Sigmoid colon (tissue), 7 donors: ENCODE measurements at regions of chr1 and their contacts with region 1.

Region 1: GRCh38 chr1:183148599-183148998 is 37.5 kb upstream of the LAMC2 start:
- DNase-seq: no peak
- H3K4me3 ChIP-seq: no peak overlapping the region
- H3K27ac ChIP-seq: peak overlapping the region; percentile 34 to 70 (median 54)
- H3K4me1 ChIP-seq: peaks cover 0 to 15% (median 10%) of the 10 kb centered on the region in 4 donors
- H3K27me3 ChIP-seq: no peaks in the 10 kb centered on the region
- CTCF ChIP-seq: no peak
- EP300 ChIP-seq: no peak
- POLR2A ChIP-seq: no peak

Region 2: DNA sequence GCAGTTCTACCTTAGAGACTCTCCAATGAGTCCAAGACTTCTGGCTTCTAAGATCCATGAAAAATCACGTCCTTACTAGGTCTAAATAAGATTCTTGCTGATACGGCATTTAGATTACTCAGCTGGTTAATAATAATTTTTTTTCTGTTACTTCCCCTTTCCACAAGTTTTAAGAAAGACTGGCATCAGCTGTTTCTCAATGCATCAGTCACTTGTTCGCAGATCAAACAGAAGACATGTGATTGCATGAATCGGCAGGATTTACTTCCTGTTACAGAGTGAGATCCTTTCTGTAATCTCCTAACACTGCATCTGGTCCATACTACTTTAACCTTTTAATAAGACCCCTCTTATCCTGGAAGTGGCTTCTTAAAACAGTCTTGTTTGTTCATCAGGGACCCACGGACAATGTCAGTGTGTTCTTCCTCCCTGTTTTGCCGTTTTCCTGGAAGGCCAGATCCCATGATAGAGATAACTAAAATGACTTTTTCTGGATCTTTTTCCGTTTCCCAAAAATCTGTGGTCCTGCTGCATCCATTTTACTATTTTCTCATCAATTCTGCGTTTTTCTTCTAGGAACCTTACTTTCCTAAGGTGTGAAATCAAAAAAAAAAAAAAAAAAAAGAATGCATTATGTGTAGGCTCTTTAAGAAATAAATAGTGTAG is 352.9 kb before region 1 on chr1:
- intact Hi-C with region 1: no loop called
- DNase-seq: no peak
- H3K4me3 ChIP-seq: no peak overlapping the region
- H3K27ac ChIP-seq: peak overlapping the region in 1 of 4 donors; percentile 42
- H3K4me1 ChIP-seq: no peaks in the 10 kb centered on the region
- H3K27me3 ChIP-seq: no peaks in the 10 kb centered on the region
- CTCF ChIP-seq: no peak
- EP300 ChIP-seq: no peak
- POLR2A ChIP-seq: no peak

Region 3: DNA sequence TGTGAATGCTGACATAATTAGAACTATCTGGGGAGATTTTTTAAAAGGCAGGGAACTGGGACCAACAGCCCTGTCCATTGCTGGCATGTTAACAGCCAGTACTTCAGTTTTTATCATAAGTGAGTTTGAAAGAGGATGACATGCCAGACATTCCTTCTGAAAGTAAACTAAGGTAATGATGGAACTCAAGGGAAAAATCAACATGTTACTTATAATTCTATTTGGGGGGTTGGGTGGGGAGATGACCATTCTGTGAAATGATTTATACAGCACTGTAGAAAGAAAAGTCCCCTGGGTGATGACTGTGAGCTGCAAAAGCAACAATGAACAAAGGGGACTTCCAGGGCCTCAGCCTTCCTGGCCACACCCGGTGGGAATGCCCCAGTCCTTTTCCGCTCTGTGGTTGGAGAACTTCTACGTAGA is 32.0 kb after region 1 on chr1:
- intact Hi-C with region 1: no loop called
- DNase-seq: no peak
- H3K4me3 ChIP-seq: no peak overlapping the region
- H3K27ac ChIP-seq: peak overlapping the region; percentile 68 to 85 (median 74)
- H3K4me1 ChIP-seq: peaks cover 0 to 24% (median 18%) of the 10 kb centered on the region in 4 donors
- H3K27me3 ChIP-seq: no peaks in the 10 kb centered on the region
- CTCF ChIP-seq: no peak
- EP300 ChIP-seq: no peak
- POLR2A ChIP-seq: no peak

Region 4: GRCh38 chr1:183218971-183219615 is 70.5 kb after region 1 on chr1:
- intact Hi-C with region 1: loop called (anchors 5 kb)
- DNase-seq: peak; percentile 93
- H3K4me3 ChIP-seq: no peak overlapping the region
- H3K27ac ChIP-seq: peak overlapping the region; percentile 76 to 88 (median 80)
- H3K4me1 ChIP-seq: peaks cover 0 to 46% (median 35%) of the 10 kb centered on the region in 4 donors
- H3K27me3 ChIP-seq: no peaks in the 10 kb centered on the region
- CTCF ChIP-seq: no peak
- EP300 ChIP-seq: peak in 3 of 4 donors; percentile 4 to 67 (median 31)
- POLR2A ChIP-seq: no peak